ENCODE measurements at regions of chr13 and their contacts with region 1.

Region 1: GRCh38 chr13:49792550-49793324 is at the start of gene KPNA3:
- DNase-seq: peak; percentile 95
- H3K4me3 ChIP-seq: peak within 1 kb of the TSS; percentile 89 to 96 (median 90)
- H3K27ac ChIP-seq: peak within 1 kb of the TSS; percentile 91
- H3K4me1 ChIP-seq: peaks cover 24% of the 10 kb centered on the region
- H3K27me3 ChIP-seq: peaks cover 0 to 3% of the 10 kb centered on the region in 2 experiments
- CTCF ChIP-seq: no peak
- POLR2A ChIP-seq: peak; percentile 68
- total RNA-seq, gene KPNA3: 56.2 and 60.4 TPM in 2 replicates

Region 2: GRCh38 chr13:49443704-49444523 is 348.8 kb before region 1 on chr13 and contains the starts of genes CAB39L and SETDB2:
- CTCF ChIA-PET with region 1: interaction called, 3 read pairs
- POLR2A ChIA-PET with region 1: no interaction called
- dilution Hi-C with region 1: no loop called
- intact Hi-C with region 1: loop called (anchors 5 kb)
- DNase-seq: peak; percentile 99
- H3K4me3 ChIP-seq: peak within 1 kb of the TSS; percentile 43 to 73 (median 66)
- H3K27ac ChIP-seq: peak within 1 kb of the TSS; percentile 73
- H3K4me1 ChIP-seq: peaks cover 20% of the 10 kb centered on the region
- H3K27me3 ChIP-seq: no peaks in the 10 kb centered on the region
- CTCF ChIP-seq: peak; percentile 28 to 52
- POLR2A ChIP-seq: peak; percentile 56
- total RNA-seq, gene CAB39L: 5.8 and 7.2 TPM in 2 replicates
- total RNA-seq, gene SETDB2: 5.4 and 5.6 TPM in 2 replicates

Region 3: DNA sequence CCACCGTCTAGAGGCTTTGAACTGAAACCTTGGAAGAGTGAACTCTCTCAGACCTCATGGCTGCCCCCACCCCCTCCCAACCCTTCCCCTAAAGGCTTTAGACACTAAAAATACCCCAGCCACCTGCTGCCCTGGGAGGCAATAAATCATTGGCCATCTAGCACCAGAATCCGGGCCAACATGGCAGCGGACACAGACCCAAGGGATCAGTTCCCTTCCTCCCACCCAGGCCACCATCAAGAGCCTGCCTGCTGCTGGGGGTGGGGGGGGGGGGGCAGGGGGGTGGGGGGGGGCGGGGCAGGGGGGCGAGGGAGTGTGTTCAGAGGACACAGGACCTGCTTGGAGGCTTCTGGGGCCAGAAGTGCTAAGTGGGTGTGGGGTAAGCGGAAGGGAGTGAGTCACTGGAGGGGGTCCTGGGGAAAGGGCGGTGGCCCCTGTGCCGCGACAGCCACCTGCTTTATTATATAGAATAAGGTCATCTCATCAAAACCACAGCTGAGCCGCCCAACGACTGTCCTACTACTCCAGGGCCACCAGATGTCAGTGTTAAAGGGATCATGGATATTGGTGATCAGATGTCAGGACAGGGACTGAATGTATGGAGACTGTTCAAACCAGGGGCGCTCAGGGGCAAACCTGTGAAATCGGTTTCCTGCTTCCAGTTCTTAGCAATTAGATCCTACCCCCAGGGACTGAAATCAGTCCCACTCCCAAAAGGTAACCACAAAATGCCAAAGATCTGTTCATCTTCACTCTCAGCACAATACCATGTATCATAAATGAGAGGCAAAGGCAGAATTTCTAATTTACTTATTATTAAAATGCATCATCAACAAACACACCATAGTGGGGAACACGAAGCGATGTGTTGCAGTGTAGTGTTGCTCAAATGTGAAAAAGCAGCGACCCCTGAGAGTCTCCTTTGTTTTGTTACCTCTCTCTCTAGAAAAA is 140.1 kb before region 1 on chr13:
- CTCF ChIA-PET with region 1: no interaction called
- POLR2A ChIA-PET with region 1: no interaction called
- dilution Hi-C with region 1: no loop called
- intact Hi-C with region 1: loop called (anchors 5 kb)
- DNase-seq: peak; percentile 37
- H3K4me3 ChIP-seq: no peak overlapping the region
- H3K27ac ChIP-seq: no peak overlapping the region
- H3K4me1 ChIP-seq: peaks cover 12% of the 10 kb centered on the region
- H3K27me3 ChIP-seq: no peaks in the 10 kb centered on the region
- CTCF ChIP-seq: peak; percentile 42 to 52
- POLR2A ChIP-seq: no peak

Region 4: GRCh38 chr13:49669735-49670309 is 122.9 kb before region 1 on chr13:
- CTCF ChIA-PET with region 1: interaction called, 3 read pairs
- POLR2A ChIA-PET with region 1: no interaction called
- dilution Hi-C with region 1: no loop called
- intact Hi-C with region 1: loop called (anchors 2 kb)
- DNase-seq: peak; percentile 86
- H3K4me3 ChIP-seq: no peak overlapping the region
- H3K27ac ChIP-seq: no peak overlapping the region
- H3K4me1 ChIP-seq: peaks cover 11% of the 10 kb centered on the region
- H3K27me3 ChIP-seq: no peaks in the 10 kb centered on the region
- CTCF ChIP-seq: peak; percentile 60 to 75
- POLR2A ChIP-seq: no peak

Region 5: GRCh38 chr13:49690992-49691886 is 101.5 kb before region 1 on chr13 and contains the start of gene EBPL:
- CTCF ChIA-PET with region 1: interaction called, 6 read pairs
- POLR2A ChIA-PET with region 1: no interaction called
- dilution Hi-C with region 1: no loop called
- intact Hi-C with region 1: loop called (anchors 1 kb)
- DNase-seq: peak; percentile 92
- H3K4me3 ChIP-seq: peak within 1 kb of the TSS; percentile 72 to 90 (median 85)
- H3K27ac ChIP-seq: peak within 1 kb of the TSS; percentile 41
- H3K4me1 ChIP-seq: peaks cover 10% of the 10 kb centered on the region
- H3K27me3 ChIP-seq: no peaks in the 10 kb centered on the region
- CTCF ChIP-seq: no peak
- POLR2A ChIP-seq: peak; percentile 84
- total RNA-seq, gene EBPL: 66.2 and 75.5 TPM in 2 replicates

Region 6: DNA sequence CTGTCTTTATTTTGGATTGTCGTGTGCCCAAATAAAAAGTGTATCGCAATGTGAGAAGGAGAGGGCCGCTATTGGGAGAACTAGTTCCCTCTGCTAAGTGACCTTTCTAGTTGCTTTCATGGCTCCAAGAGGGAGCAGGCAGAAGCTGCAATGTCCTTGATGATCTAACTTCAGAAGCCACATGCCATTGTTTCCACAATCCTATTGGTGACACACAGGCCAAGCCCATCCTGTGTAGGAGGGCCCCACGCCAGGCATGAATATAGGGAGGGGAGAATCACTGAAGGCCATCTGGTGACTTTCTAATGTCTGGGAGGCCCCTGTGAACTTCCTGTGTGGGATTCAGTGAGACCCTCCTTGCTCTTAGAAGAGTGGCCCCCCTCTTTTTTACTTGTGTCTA is 47.5 kb after region 1 on chr13:
- CTCF ChIA-PET with region 1: interaction called, 3 read pairs
- POLR2A ChIA-PET with region 1: no interaction called
- dilution Hi-C with region 1: no loop called
- intact Hi-C with region 1: loop called (anchors 5 kb)
- DNase-seq: no peak
- H3K4me3 ChIP-seq: no peak overlapping the region
- H3K27ac ChIP-seq: no peak overlapping the region
- H3K4me1 ChIP-seq: no peaks in the 10 kb centered on the region
- H3K27me3 ChIP-seq: no peaks in the 10 kb centered on the region
- CTCF ChIP-seq: no peak
- POLR2A ChIP-seq: no peak

Region 7: GRCh38 chr13:49936085-49936940 is 143.6 kb after region 1 on chr13 and contains the start of gene SPRYD7:
- CTCF ChIA-PET with region 1: interaction called, 6 read pairs
- POLR2A ChIA-PET with region 1: interaction called, 3 read pairs
- dilution Hi-C with region 1: no loop called
- intact Hi-C with region 1: loop called (anchors 2 kb)
- DNase-seq: peak; percentile 99
- H3K4me3 ChIP-seq: peak within 1 kb of the TSS; percentile 69 to 82 (median 79)
- H3K27ac ChIP-seq: peak within 1 kb of the TSS; percentile 21
- H3K4me1 ChIP-seq: peaks cover 8% of the 10 kb centered on the region
- H3K27me3 ChIP-seq: no peaks in the 10 kb centered on the region
- CTCF ChIP-seq: peak; percentile 90 to 95
- POLR2A ChIP-seq: peak; percentile 70
- total RNA-seq, gene SPRYD7: 7.0 and 7.5 TPM in 2 replicates

Region 8: GRCh38 chr13:50130123-50130946 is 337.6 kb after region 1 on chr13:
- CTCF ChIA-PET with region 1: no interaction called
- POLR2A ChIA-PET with region 1: no interaction called
- dilution Hi-C with region 1: no loop called
- intact Hi-C with region 1: no loop called
- DNase-seq: peak; percentile 53
- H3K4me3 ChIP-seq: peak overlapping the region; percentile 1 to 35 (median 20)
- H3K27ac ChIP-seq: no peak overlapping the region
- H3K4me1 ChIP-seq: peaks cover 9% of the 10 kb centered on the region
- H3K27me3 ChIP-seq: peaks cover 39 to 43% of the 10 kb centered on the region in 2 experiments
- CTCF ChIP-seq: no peak
- POLR2A ChIP-seq: no peak